Panc1 (cell line): ENCODE measurements at regions of chr1 and their contacts with region 1.

Region 1: DNA sequence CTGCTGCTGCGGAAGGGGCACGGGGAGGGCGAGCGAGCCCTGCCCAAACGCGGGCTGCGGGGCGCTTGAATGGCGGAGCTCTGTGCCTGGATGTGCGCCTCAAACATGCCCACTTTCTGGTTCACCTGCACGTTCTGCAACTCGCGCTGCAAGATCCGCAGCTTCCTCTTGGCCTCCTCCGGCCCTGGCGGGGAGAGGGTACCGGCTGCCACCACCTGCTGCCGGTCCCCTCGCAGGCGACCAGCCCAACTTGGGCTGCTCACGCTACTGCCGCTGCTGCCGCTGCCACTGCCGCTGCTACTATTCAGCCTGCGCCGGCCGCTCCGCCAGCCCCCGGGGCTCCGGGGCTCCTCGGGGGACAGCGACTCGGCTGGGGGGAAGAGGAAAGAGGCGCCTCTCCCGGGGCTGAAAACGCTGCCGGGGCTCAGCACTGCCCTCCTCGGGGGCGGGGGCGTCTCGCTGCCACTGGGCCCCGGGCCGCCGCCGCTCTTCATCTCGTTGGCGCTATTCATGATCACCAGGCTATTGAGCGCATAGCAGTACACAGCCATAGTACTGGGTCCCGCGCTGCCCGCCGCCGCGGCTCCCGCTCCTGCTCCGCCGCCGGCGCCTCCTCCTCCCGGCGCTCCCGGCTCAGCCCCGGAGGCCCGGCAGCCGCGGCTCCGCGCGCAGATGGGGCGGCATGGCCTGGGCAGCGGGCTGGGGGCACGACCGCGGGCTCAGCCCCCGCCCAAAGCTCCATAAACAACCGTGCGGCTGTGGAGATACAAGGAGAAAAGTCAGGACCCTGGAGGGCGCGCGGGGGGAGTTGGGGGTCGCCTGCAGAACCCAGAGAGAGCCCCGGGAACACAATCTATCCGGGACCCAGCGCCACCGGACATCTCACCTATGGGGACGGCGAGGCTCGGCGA is 1.9 kb downstream of the ITPKB start:
- DNase-seq: no peak
- ATAC-seq: peak; percentile 64
- H3K4me3 ChIP-seq: peak overlapping the region; percentile 54 to 95
- H3K27ac ChIP-seq: peak overlapping the region; percentile 80
- H3K4me1 ChIP-seq: no peaks in the 10 kb centered on the region
- H3K27me3 ChIP-seq: 0 out of 2 replicates have a peak, but pooled peaks cover 4% of the 10 kb centered on the region
- CTCF ChIP-seq: no peak

Region 2: GRCh38 chr1:226519716-226520598 is 217.2 kb before region 1 on chr1:
- CTCF ChIA-PET with region 1: no interaction called
- POLR2A ChIA-PET with region 1: no interaction called
- in situ Hi-C with region 1: no loop called
- intact Hi-C with region 1: no loop called
- DNase-seq: no peak
- ATAC-seq: peak; percentile 60
- H3K4me3 ChIP-seq: no peak overlapping the region
- H3K27ac ChIP-seq: no peak overlapping the region
- H3K4me1 ChIP-seq: no peaks in the 10 kb centered on the region
- H3K27me3 ChIP-seq: peaks cover 10% of the 10 kb centered on the region
- CTCF ChIP-seq: no peak; the same call in 1 of the 2 replicates

Region 3: DNA sequence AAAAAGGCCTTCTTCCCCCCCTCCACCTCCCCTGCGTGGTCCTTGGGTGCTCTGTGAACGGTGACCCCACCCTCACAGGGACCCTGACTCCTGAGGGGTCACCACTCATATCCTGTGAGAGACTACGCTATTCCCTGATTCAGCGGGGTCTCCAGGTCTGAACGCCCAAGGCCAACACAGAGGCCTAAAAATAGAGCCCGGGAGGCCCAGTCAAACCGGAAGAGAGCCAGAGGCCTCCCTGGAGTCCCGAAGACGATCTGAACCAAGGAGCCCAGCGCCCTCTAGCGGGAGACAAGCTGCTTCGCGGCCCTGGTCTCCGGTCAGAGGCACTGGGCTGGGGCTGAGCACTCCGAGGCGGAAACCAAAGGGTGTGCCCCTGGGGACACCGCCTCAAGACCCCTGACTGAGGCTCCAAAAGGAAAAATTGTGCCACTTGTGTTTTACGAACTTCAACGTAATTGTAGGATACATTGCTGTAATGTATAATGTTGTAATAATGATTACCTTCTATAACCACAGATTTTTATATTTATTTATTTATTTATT is 90.9 kb after region 1 on chr1:
- CTCF ChIA-PET with region 1: no interaction called
- POLR2A ChIA-PET with region 1: interaction called, 5 read pairs
- in situ Hi-C with region 1: no loop called
- intact Hi-C with region 1: loop called (anchors 5 kb)
- DNase-seq: peak; percentile 67
- ATAC-seq: peak; percentile 100
- H3K4me3 ChIP-seq: peak overlapping the region in 1 of 2 experiments; percentile 23; a peak in 1 of 4 replicates
- H3K27ac ChIP-seq: peak overlapping the region; percentile 73; the same call in 1 of the 2 replicates
- H3K4me1 ChIP-seq: peaks cover 4% of the 10 kb centered on the region
- H3K27me3 ChIP-seq: no peaks in the 10 kb centered on the region
- CTCF ChIP-seq: peak; percentile 95

Region 4: DNA sequence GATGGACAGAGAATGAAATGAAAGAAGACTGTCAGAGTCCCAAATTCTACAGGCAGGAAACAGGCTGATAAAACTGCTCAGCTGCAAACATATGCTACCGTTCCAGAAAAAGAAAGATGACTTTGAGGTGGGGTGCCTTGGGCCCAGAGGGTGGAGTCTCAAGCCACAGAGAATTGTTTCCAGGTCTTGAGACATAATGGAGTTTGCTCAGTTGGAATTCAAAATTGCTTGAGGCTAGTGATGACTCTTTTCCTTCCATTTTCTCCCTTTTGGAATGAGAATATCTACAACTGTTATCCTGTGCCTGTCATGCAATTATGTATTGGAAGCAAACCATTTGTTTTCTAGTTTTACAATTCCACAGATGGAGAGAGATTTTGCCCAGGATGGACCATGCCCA is 109.6 kb after region 1 on chr1:
- CTCF ChIA-PET with region 1: no interaction called
- POLR2A ChIA-PET with region 1: no interaction called
- in situ Hi-C with region 1: no loop called
- intact Hi-C with region 1: no loop called
- DNase-seq: no peak
- ATAC-seq: no peak
- H3K4me3 ChIP-seq: no peak overlapping the region
- H3K27ac ChIP-seq: no peak overlapping the region
- H3K4me1 ChIP-seq: no peaks in the 10 kb centered on the region
- H3K27me3 ChIP-seq: no peaks in the 10 kb centered on the region
- CTCF ChIP-seq: no peak

Region 5: DNA sequence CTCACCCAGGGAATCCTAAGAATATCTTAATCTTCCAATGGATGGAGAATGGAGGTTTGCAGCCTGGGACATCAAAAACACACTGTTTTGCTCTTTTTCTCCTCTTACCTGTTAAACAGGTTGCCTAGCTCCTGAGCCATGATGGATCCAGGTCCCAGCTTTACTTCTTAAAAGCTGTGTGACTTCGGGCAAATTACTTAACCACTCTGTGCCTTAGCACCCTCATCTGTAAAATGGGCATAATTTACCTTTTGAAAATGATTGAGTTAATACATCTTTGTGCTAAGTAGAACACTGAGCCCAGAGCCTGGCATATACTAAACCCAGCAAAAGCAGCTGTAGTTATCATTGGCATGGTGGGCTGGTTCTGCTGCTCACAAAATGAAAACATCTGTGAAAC is 213.2 kb after region 1 on chr1:
- CTCF ChIA-PET with region 1: interaction called, 10 read pairs
- POLR2A ChIA-PET with region 1: no interaction called
- in situ Hi-C with region 1: no loop called
- intact Hi-C with region 1: no loop called
- DNase-seq: no peak
- ATAC-seq: no peak
- H3K4me3 ChIP-seq: no peak overlapping the region
- H3K27ac ChIP-seq: no peak overlapping the region
- H3K4me1 ChIP-seq: peaks cover 11% of the 10 kb centered on the region
- H3K27me3 ChIP-seq: no peaks in the 10 kb centered on the region
- CTCF ChIP-seq: no peak